HepG2 (cell line): ENCODE measurements at regions of chr14 and their contacts with region 1.

Region 1: DNA sequence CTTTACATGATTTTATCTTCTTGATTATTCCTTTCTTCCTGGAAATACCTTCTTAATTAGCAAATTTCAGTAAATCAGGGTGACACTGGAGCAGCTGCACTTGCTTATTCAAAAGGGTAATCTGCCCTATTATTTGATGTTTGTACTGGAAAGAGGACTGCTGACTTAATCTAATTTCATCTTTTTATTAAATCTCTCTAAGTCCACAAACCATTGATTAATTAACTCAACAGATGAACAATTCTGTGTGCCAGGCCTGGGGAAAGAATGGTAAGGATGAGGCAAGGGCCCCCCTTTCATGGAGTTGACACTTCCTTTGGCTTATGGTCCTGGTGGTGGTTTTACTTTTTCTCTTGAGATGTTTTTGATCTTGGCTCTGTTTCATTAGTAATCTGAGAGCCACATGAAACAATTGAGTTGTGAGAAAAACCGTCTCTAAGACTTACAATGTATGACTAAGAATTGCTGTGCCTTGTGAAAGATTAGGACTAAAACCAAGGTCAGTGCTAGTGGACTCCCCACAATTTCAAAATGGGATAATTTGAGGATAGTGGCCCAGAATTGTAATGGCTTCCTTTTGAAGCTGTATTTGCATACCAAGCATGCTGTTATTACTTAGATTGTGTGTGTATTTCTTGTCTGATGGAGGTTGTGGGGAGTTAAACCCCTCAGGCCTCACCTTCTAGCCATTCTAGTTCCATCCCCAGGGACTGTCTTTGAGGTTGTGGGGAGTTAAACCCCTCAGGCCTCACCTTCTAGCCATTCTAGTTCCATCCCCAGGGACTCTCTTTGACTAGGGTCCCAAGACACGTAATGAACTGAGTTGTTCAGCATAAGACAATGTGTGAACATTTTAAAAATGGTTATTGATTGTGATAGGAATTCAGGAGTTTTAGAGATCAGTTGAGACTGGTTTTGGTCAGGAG is 52.6 kb upstream of the EVL start:
- DNase-seq: no peak
- ATAC-seq: no peak
- H3K4me3 ChIP-seq: no peak overlapping the region
- H3K27ac ChIP-seq: no peak overlapping the region
- H3K4me1 ChIP-seq: no peaks in the 10 kb centered on the region
- H3K27me3 ChIP-seq: no peaks in the 10 kb centered on the region
- CTCF ChIP-seq: no peak
- EP300 ChIP-seq: no peak
- POLR2A ChIP-seq: no peak
- RAD21 ChIP-seq: no peak

Region 2: DNA sequence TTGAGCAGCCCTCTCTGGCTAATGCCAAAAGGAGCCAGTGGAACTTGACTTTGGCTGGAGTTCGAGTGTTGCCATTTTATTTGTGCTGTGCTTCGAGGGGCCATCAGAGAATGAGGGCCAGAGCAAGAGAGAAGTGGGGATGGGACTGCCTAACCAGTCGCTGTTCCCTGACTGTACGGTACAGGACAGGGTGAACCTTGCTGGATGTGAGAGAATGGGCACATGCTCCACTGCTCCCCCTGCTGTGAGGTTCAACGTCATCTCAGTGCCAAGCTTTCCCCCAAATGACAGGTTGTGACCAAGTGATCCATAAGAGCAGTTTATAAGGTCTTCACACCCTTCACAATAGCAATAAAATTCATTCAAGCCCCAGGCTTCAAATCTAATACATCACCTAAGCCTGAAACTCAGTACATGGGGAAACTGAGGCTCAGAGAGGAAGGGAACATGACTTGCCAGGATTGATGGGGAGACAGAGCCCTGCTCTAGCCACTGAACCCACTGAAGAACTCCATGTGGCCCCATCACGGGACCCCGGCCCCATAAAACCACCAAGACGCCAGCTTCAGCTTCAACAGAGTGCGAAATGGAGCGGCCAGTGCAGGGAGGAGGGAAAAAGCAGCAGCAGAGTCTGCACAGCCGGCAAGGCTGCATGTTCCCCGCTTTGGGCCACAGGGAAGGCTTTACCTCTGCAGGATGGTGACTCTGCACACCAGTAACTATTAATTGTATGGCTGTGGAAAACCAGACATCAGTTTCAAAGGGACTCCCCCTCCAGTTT is 685.4 kb before region 1 on chr14:
- CTCF ChIA-PET with region 1: no interaction called
- POLR2A ChIA-PET with region 1: no interaction called
- in situ Hi-C with region 1: no loop called
- intact Hi-C with region 1: loop called (anchors 5 kb)
- DNase-seq: no peak
- ATAC-seq: peak; percentile 53
- H3K4me3 ChIP-seq: no peak overlapping the region
- H3K27ac ChIP-seq: no peak overlapping the region
- H3K4me1 ChIP-seq: peaks cover 35% of the 10 kb centered on the region
- H3K27me3 ChIP-seq: no peaks in the 10 kb centered on the region; a peak in 1 of 5 replicates
- CTCF ChIP-seq: peak; percentile 46
- EP300 ChIP-seq: no peak
- POLR2A ChIP-seq: no peak
- RAD21 ChIP-seq: no peak

Region 3: GRCh38 chr14:99995700-99996356 is 16.8 kb before region 1 on chr14:
- CTCF ChIA-PET with region 1: no interaction called
- POLR2A ChIA-PET with region 1: no interaction called
- in situ Hi-C with region 1: no loop called
- intact Hi-C with region 1: no loop called
- DNase-seq: peak; percentile 55
- ATAC-seq: peak; percentile 96
- H3K4me3 ChIP-seq: no peak overlapping the region
- H3K27ac ChIP-seq: no peak overlapping the region
- H3K4me1 ChIP-seq: no peaks in the 10 kb centered on the region
- H3K27me3 ChIP-seq: no peaks in the 10 kb centered on the region
- CTCF ChIP-seq: peak; percentile 71
- EP300 ChIP-seq: no peak
- POLR2A ChIP-seq: no peak
- RAD21 ChIP-seq: no peak